Endothelial cell of umbilical vein (primary cell): ENCODE measurements at regions of chr1 and their contacts with region 1.

Region 1: GRCh38 chr1:159161001-159161718 is 10.3 kb upstream of the CADM3 start:
- DNase-seq: peak; percentile 86
- H3K4me3 ChIP-seq: no peak overlapping the region
- H3K27ac ChIP-seq: no peak overlapping the region
- H3K4me1 ChIP-seq: peaks cover 7% of the 10 kb centered on the region
- H3K27me3 ChIP-seq: peaks cover 5 to 10% of the 10 kb centered on the region in 2 experiments
- CTCF ChIP-seq: peak; percentile 96 to 99
- POLR2A ChIP-seq: peak; percentile 25

Region 2: GRCh38 chr1:158771950-158772866 is 389.0 kb before region 1 on chr1 and contains the start of gene OR6N1:
- CTCF ChIA-PET with region 1: no interaction called
- POLR2A ChIA-PET with region 1: no interaction called
- dilution Hi-C with region 1: no loop called
- intact Hi-C with region 1: no loop called
- DNase-seq: no peak
- H3K4me3 ChIP-seq: no peak within 1 kb of the TSS
- H3K27ac ChIP-seq: no peak within 1 kb of the TSS
- H3K4me1 ChIP-seq: no peaks in the 10 kb centered on the region
- H3K27me3 ChIP-seq: no peaks in the 10 kb centered on the region
- CTCF ChIP-seq: no peak
- POLR2A ChIP-seq: no peak
- total RNA-seq, gene OR6N1: not detected in 2 replicates

Region 3: DNA sequence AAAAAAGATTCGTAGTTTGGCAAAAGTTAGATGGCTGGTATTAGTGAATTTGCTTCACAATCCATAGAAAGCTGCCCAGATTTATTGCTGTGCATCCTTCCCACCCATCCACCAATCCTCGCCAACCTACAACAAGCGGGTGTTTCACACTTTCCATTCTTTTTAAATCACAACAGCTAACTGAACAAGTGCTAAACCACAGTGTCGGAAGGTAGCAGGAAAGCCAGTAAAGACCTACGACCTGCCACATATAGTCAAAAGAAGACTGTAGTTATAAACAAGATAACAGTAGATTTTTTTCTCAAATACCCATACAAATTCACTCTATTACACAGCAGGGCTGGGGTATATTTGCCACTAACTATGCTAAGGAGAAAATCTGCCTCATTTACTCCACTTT is 37.6 kb before region 1 on chr1:
- CTCF ChIA-PET with region 1: no interaction called
- POLR2A ChIA-PET with region 1: no interaction called
- dilution Hi-C with region 1: no loop called
- intact Hi-C with region 1: no loop called
- DNase-seq: no peak
- H3K4me3 ChIP-seq: no peak overlapping the region
- H3K27ac ChIP-seq: no peak overlapping the region
- H3K4me1 ChIP-seq: no peaks in the 10 kb centered on the region
- H3K27me3 ChIP-seq: peaks cover 7 to 8% of the 10 kb centered on the region in 2 experiments
- CTCF ChIP-seq: no peak
- POLR2A ChIP-seq: no peak

Region 4: GRCh38 chr1:159188375-159188788 is 27.2 kb after region 1 on chr1:
- CTCF ChIA-PET with region 1: interaction called, 5 read pairs
- POLR2A ChIA-PET with region 1: no interaction called
- dilution Hi-C with region 1: no loop called
- intact Hi-C with region 1: loop called (anchors 2 kb)
- DNase-seq: peak; percentile 80
- H3K4me3 ChIP-seq: peak overlapping the region in 1 of 3 experiments; percentile 5
- H3K27ac ChIP-seq: no peak overlapping the region
- H3K4me1 ChIP-seq: no peaks in the 10 kb centered on the region
- H3K27me3 ChIP-seq: peaks cover 31 to 39% of the 10 kb centered on the region in 2 experiments
- CTCF ChIP-seq: no peak
- POLR2A ChIP-seq: no peak

Region 5: GRCh38 chr1:159197561-159198557 is 36.7 kb after region 1 on chr1:
- CTCF ChIA-PET with region 1: interaction called, 45 read pairs
- POLR2A ChIA-PET with region 1: no interaction called
- dilution Hi-C with region 1: no loop called
- intact Hi-C with region 1: loop called (anchors 1 kb)
- DNase-seq: peak; percentile 81
- H3K4me3 ChIP-seq: no peak overlapping the region
- H3K27ac ChIP-seq: no peak overlapping the region
- H3K4me1 ChIP-seq: no peaks in the 10 kb centered on the region
- H3K27me3 ChIP-seq: no peaks in the 10 kb centered on the region
- CTCF ChIP-seq: peak; percentile 85 to 87
- POLR2A ChIP-seq: no peak

Region 6: DNA sequence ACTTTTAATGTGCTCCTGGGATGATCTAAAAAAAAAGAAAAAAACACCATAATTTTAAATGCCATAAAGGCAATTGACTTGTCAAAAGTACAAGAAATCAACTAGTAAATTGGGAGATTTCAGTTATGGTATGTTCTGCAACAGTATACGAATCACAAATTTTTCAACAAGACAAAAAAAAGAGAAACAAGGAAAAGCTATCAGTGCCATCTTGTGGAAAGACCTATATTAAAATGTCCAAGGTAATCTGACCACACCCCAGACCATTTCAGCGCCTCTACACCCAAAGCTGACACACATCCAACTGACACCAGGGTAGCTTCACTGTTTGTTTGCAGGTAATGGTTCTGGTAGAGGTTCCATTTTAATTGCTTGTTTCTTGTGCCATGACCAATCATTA is 614.6 kb after region 1 on chr1:
- CTCF ChIA-PET with region 1: interaction called, 24 read pairs
- POLR2A ChIA-PET with region 1: no interaction called
- dilution Hi-C with region 1: no loop called
- intact Hi-C with region 1: loop called (anchors 1 kb)
- DNase-seq: peak; percentile 46
- H3K4me3 ChIP-seq: no peak overlapping the region
- H3K27ac ChIP-seq: peak overlapping the region; percentile 9
- H3K4me1 ChIP-seq: peaks cover 53% of the 10 kb centered on the region
- H3K27me3 ChIP-seq: no peaks in the 10 kb centered on the region
- CTCF ChIP-seq: no peak
- POLR2A ChIP-seq: peak; percentile 49

Region 7: GRCh38 chr1:159790237-159790917 is 629.2 kb after region 1 on chr1:
- CTCF ChIA-PET with region 1: interaction called, 25 read pairs
- POLR2A ChIA-PET with region 1: no interaction called
- dilution Hi-C with region 1: no loop called
- intact Hi-C with region 1: loop called (anchors 1 kb)
- DNase-seq: peak; percentile 57
- H3K4me3 ChIP-seq: no peak overlapping the region
- H3K27ac ChIP-seq: no peak overlapping the region
- H3K4me1 ChIP-seq: peaks cover 16% of the 10 kb centered on the region
- H3K27me3 ChIP-seq: no peaks in the 10 kb centered on the region
- CTCF ChIP-seq: peak; percentile 61 to 65
- POLR2A ChIP-seq: no peak